ENCODE measurements at regions of chr5 and their contacts with region 1.

Region 1: GRCh38 chr5:35089334-35090314 is 41.9 kb upstream of the AGXT2 start:
- DNase-seq: peak; percentile 21
- ATAC-seq: peak; percentile 81
- H3K4me3 ChIP-seq: no peak overlapping the region
- H3K27ac ChIP-seq: no peak overlapping the region
- H3K4me1 ChIP-seq: no peaks in the 10 kb centered on the region
- H3K27me3 ChIP-seq: peaks cover 24% of the 10 kb centered on the region
- CTCF ChIP-seq: peak; percentile 35 to 72 (median 71); a peak in 5 of 6 replicates
- POLR2A ChIP-seq: no peak
- RAD21 ChIP-seq: peak; percentile 78

Region 2: DNA sequence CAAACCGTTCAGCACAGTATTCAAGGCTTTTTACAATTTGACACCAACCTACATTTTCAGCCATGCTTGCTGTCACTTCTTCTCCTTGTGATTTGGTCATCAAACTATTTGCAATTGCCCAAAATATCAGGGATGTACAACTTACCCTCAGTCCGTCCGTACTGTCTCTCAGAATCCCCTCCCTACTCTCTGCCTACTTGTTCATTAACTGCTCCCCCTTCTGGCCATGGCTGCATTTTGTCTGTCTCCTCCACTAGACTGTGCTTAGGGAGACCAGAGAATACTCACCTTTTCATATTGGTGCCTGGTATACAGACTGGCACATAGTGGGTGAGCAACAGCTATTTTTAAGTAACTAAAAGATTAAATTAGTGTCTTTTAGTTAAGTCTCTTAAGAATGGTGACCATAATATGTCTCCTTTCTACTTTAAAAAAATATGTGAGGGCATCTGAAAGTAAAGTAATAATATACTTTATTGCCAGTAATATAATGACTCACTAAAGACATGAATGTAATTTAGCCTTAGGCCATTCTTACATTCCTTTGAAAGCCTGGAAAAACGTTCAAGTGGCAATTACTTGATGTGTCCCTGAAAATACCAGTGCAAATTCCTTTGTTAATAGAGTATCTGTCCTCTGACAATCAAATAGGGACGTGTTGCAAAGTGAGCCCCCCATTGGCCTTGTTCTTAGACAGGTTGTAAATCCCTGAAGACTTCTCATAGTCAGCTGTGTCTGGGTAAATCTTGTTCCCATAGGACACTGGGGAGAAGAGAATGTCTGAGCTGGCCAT is 112.9 kb after region 1 on chr5:
- CTCF ChIA-PET with region 1: no interaction called
- POLR2A ChIA-PET with region 1: no interaction called
- RAD21 ChIA-PET with region 1: no interaction called
- intact Hi-C with region 1: loop called (anchors 1 kb)
- DNase-seq: peak; percentile 36
- ATAC-seq: peak; percentile 91
- H3K4me3 ChIP-seq: no peak overlapping the region
- H3K27ac ChIP-seq: no peak overlapping the region
- H3K4me1 ChIP-seq: no peaks in the 10 kb centered on the region
- H3K27me3 ChIP-seq: peaks cover 33% of the 10 kb centered on the region
- CTCF ChIP-seq: peak; percentile 22 to 65 (median 62); a peak in 5 of 6 replicates
- POLR2A ChIP-seq: no peak
- RAD21 ChIP-seq: peak; percentile 19; the same call in 1 of the 2 replicates

Region 3: DNA sequence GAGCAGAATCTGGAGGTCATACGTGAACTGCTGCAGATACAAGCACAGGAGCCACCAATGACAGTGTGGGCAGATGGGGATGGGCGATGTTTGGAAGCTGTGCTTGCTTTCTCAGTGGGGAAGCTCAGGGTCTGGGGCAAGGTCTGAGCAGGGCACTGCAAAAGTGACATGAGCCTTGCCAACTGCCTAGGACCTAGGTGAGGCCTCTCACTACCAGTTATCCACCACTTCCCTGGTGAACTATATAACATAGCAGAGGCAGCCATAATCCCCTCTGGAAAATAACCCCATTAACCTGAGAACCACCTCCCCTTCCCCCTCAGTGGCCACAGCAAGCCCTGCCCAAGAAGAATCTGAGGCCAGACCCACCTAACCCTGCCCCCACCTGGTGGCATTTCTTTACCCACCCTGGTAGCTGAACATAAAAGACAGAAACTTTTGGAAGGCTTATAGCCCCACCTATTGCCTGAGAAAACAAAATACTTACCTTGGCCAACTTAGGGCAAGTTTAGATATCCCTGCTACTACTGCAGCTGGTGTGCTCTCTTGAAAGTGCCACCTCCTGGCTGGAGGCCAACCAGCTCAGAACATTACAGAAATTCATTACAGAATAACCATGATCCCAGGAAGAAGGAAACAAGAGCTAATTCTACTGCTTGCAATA is 509.2 kb after region 1 on chr5:
- CTCF ChIA-PET with region 1: no interaction called
- POLR2A ChIA-PET with region 1: no interaction called
- RAD21 ChIA-PET with region 1: no interaction called
- intact Hi-C with region 1: loop called (anchors 10 kb)
- DNase-seq: peak; percentile 13
- ATAC-seq: peak; percentile 38
- H3K4me3 ChIP-seq: no peak overlapping the region
- H3K27ac ChIP-seq: no peak overlapping the region
- H3K4me1 ChIP-seq: no peaks in the 10 kb centered on the region
- H3K27me3 ChIP-seq: no peaks in the 10 kb centered on the region; the same call in 1 of the 2 replicates
- CTCF ChIP-seq: peak in 2 of 3 experiments; percentile 14 to 32; a peak in 1 of 6 replicates
- POLR2A ChIP-seq: no peak
- RAD21 ChIP-seq: peak; percentile 39; the same call in 1 of the 2 replicates

Region 4: DNA sequence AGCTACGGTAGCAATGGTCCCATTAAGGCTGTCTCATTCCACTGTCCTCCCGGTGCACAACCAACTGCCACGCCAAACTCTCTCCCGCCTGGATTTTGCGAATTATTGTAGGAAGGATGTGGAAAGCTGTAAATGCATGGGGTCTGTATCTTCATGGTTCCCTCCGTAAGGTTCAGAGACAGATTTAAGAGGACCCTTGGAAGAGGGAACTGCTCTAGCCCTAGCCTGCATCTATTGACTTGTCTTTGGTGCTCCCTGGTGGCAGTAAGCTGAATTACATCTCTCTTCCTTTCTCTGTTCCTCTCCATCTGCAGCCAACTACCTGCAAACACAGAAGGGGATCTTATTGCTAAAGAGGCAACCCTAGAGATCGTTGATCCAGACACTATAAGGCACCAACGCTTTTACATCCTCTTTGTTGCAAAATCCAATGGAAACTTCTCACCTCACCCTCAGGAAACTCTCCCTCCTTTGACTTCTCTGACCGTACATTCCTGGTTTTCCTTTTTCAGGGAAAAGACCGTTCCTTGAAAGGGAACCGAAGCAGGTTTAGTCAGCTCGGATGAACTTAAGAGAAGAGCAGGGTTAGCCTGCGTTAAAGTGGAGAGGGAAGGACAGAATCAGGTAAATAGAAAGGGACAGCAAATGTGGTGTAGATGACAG is 836.9 kb after region 1 on chr5:
- CTCF ChIA-PET with region 1: interaction called, 3 read pairs
- POLR2A ChIA-PET with region 1: no interaction called
- RAD21 ChIA-PET with region 1: no interaction called
- intact Hi-C with region 1: loop called (anchors 1 kb)
- DNase-seq: peak; percentile 28
- ATAC-seq: peak; percentile 80
- H3K4me3 ChIP-seq: no peak overlapping the region
- H3K27ac ChIP-seq: no peak overlapping the region
- H3K4me1 ChIP-seq: no peaks in the 10 kb centered on the region
- H3K27me3 ChIP-seq: peaks cover 46% of the 10 kb centered on the region
- CTCF ChIP-seq: peak; percentile 49 to 85 (median 71); a peak in 5 of 6 replicates
- POLR2A ChIP-seq: no peak
- RAD21 ChIP-seq: peak; percentile 78